HCT116 (cell line): ENCODE measurements at regions of chr10 and their contacts with region 1.

Region 1: DNA sequence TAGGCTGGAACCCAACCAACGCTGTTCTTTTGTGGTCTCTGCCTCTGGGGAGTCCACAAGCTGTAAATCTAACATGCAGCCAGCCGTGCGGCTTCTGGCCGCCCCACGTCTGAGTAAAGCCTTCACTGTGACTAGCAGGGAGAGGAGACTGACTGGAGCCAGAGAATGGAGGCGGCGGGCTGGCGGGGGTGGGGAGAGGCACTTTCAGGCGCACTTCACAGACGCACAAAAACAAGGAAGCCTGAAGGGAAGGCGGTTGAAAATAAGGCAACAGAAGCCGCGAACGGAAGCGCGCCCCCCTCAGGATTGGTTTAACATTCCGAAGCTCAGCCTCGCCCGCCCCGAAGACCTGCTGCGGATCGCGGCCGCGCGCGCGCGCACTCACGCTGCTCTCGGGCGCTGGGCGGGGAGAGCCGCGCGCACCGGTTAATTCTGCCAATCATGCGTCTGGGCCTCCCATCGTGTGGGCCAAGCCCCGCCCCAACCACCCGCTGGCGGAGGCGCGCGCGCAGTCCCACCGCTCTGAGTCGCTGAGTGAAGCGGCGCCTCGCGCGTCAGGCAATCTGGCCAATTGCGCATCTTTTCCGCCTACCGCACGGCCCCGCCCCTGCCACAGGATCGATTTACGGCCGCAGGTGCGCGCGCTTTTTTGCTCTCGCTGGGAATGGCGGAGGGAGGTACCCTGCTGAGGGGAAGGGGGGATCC is at the start of gene SFR1:
- DNase-seq: peak; percentile 99
- ATAC-seq: peak; percentile 85
- H3K4me3 ChIP-seq: peak within 1 kb of the TSS; percentile 83 to 86
- H3K27ac ChIP-seq: peak within 1 kb of the TSS; percentile 96
- H3K4me1 ChIP-seq: peaks cover 41 to 65% of the 10 kb centered on the region in 2 experiments
- H3K27me3 ChIP-seq: no peaks in the 10 kb centered on the region
- CTCF ChIP-seq: peak in 2 of 3 experiments; percentile 59 to 74; a peak in 4 of 6 replicates
- POLR2A ChIP-seq: peak; percentile 71
- RAD21 ChIP-seq: no peak
- total RNA-seq, gene SFR1: 38.5 TPM

Region 2: GRCh38 chr10:103712570-103713498 is 408.8 kb before region 1 on chr10:
- CTCF ChIA-PET with region 1: interaction called, 3 read pairs
- POLR2A ChIA-PET with region 1: no interaction called
- RAD21 ChIA-PET with region 1: no interaction called
- intact Hi-C with region 1: loop called (anchors 5 kb)
- DNase-seq: peak; percentile 75
- ATAC-seq: peak; percentile 75
- H3K4me3 ChIP-seq: no peak overlapping the region
- H3K27ac ChIP-seq: no peak overlapping the region
- H3K4me1 ChIP-seq: peaks cover 36 to 51% of the 10 kb centered on the region in 2 experiments
- H3K27me3 ChIP-seq: no peaks in the 10 kb centered on the region
- CTCF ChIP-seq: peak in 2 of 3 experiments; percentile 84 to 99; a peak in 4 of 6 replicates
- POLR2A ChIP-seq: no peak
- RAD21 ChIP-seq: no peak

Region 3: DNA sequence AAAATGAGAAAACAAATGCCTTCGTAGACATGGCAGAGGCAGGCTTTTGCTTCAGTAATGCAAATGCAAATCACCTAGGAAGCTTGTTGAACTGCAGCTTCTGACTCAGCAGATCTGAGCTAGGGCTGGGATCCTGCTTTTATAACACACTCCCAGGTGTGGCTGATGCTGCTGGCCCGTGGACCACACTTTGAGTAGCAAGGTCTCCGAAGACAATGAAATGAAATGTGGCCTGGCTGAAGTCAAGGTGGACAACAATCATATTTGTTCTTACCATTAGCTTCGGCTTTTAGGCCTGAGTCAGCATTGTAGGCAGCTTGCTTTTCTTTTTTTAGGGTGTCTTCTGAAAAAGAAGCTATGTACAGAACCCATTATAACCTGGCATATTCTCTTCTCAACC is 62.3 kb before region 1 on chr10:
- CTCF ChIA-PET with region 1: interaction called, 11 read pairs
- POLR2A ChIA-PET with region 1: interaction called, 4 read pairs
- RAD21 ChIA-PET with region 1: no interaction called
- intact Hi-C with region 1: no loop called
- DNase-seq: no peak
- ATAC-seq: no peak
- H3K4me3 ChIP-seq: no peak overlapping the region
- H3K27ac ChIP-seq: no peak overlapping the region
- H3K4me1 ChIP-seq: peaks cover 0 to 10% of the 10 kb centered on the region in 2 experiments; a peak in 1 of 4 replicates
- H3K27me3 ChIP-seq: no peaks in the 10 kb centered on the region
- CTCF ChIP-seq: no peak
- POLR2A ChIP-seq: no peak
- RAD21 ChIP-seq: no peak

Region 4: GRCh38 chr10:104109908-104110662 is 11.6 kb before region 1 on chr10:
- CTCF ChIA-PET with region 1: interaction called, 8 read pairs
- POLR2A ChIA-PET with region 1: interaction called, 18 read pairs
- RAD21 ChIA-PET with region 1: no interaction called
- intact Hi-C with region 1: no loop called
- DNase-seq: peak; percentile 90
- ATAC-seq: peak; percentile 87
- H3K4me3 ChIP-seq: peak overlapping the region in 1 of 2 experiments; percentile 16; a peak in 2 of 4 replicates
- H3K27ac ChIP-seq: peak overlapping the region; percentile 43; the same call in 1 of the 2 replicates
- H3K4me1 ChIP-seq: peaks cover 11 to 46% of the 10 kb centered on the region in 2 experiments
- H3K27me3 ChIP-seq: no peaks in the 10 kb centered on the region
- CTCF ChIP-seq: no peak
- POLR2A ChIP-seq: no peak
- RAD21 ChIP-seq: peak; percentile 49

Region 5: DNA sequence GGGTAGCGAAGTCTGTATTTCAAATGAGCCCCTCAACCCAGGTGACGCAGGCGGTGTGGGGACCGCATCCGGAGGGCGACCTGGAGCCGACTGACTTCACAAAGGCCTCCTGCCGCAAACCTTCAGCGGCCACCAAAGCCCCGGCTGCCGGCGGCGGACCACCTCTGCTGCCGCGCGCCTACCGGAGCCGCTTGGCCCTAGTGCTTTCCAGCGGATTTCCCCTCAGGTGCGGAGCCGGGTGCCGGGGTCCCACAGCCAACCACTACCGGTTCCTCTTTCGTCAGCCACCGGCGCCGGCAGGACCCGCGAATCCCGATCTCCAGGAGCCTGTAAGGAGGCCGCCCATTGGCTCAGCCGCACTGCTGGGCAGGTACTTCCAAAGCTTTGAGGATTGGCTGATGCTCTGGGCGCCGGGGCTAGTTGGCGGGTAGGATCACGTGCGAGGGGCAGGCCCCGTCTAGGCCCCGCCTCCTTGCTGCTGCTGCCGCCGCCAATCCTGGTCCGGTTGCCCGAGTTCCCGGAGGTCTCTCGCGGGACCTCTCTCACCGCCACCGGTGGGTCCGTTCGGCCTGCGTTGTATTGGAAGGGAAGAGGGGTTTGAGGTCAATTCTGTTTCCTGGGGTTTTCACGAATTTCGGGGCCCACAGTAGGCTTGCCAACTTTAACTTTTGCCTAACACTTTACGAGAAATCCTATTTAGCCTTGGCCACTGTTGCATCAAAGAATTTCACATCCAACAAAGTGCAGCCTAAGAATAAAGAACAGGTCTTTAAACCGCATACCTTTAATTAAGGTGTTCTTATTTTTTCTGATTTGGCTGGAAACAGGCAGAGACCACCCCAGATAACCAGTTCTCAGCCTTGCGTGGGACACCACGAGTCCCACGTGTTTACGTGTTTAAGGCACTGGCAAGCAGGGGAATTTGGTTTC is 147.3 kb after region 1 on chr10 and contains the start of gene GSTO2:
- CTCF ChIA-PET with region 1: interaction called, 9 read pairs
- POLR2A ChIA-PET with region 1: interaction called, 9 read pairs
- RAD21 ChIA-PET with region 1: no interaction called
- intact Hi-C with region 1: loop called (anchors 5 kb)
- DNase-seq: peak; percentile 99
- ATAC-seq: peak; percentile 98
- H3K4me3 ChIP-seq: peak within 1 kb of the TSS; percentile 79 to 81
- H3K27ac ChIP-seq: peak within 1 kb of the TSS; percentile 50
- H3K4me1 ChIP-seq: peaks cover 4 to 20% of the 10 kb centered on the region in 2 experiments; a peak in 3 of 4 replicates
- H3K27me3 ChIP-seq: no peaks in the 10 kb centered on the region
- CTCF ChIP-seq: no peak
- POLR2A ChIP-seq: peak; percentile 94
- RAD21 ChIP-seq: no peak
- total RNA-seq, gene GSTO2: 115 TPM